ENCODE measurements at regions of chr9 and their contacts with region 1.

Region 1: DNA sequence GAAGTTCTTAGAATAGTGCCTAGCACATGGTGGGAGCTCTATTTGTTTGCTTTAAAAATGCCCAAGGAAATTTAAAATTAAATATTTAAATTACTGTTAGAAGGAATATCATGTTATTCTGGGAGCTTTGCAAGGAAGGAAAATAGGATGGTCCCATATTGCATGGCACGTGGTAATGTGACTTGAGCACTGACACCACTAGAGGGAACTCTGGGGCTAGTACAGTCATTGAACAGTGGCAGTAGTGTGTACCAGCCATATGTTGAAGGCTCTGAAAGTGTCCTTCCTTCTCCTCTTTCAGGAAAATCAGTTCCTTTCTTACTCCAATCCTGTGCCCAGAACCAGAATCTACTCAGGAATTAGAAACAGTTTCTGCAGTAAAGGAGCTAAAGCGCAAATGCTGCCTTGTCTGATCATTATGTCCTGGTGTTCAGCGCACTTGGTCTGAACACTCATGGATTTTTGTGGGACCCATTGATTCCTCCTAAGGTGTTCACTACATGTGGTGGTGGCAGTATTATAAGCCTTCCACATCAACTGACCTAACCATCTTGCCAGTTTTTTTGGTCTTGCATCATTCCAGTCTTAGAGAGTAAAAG is 54.1 kb downstream of the GDA start:
- DNase-seq: peak; percentile 22
- ATAC-seq: peak; percentile 83
- H3K4me3 ChIP-seq: no peak overlapping the region
- H3K27ac ChIP-seq: no peak overlapping the region
- H3K4me1 ChIP-seq: no peaks in the 10 kb centered on the region
- H3K27me3 ChIP-seq: peaks cover 2% of the 10 kb centered on the region; the same call in 1 of the 2 replicates
- CTCF ChIP-seq: peak; percentile 41
- POLR2A ChIP-seq: no peak
- RAD21 ChIP-seq: peak; percentile 39

Region 2: GRCh38 chr9:71549023-71549422 is 654.3 kb before region 1 on chr9:
- CTCF ChIA-PET with region 1: no interaction called
- POLR2A ChIA-PET with region 1: no interaction called
- dilution Hi-C with region 1: no loop called
- in situ Hi-C with region 1: no loop called
- intact Hi-C with region 1: no loop called
- DNase-seq: no peak
- ATAC-seq: no peak
- H3K4me3 ChIP-seq: no peak overlapping the region
- H3K27ac ChIP-seq: no peak overlapping the region
- H3K4me1 ChIP-seq: no peaks in the 10 kb centered on the region
- H3K27me3 ChIP-seq: no peaks in the 10 kb centered on the region
- CTCF ChIP-seq: no peak
- POLR2A ChIP-seq: no peak
- RAD21 ChIP-seq: no peak

Region 3: GRCh38 chr9:72753266-72753893 is 550.1 kb after region 1 on chr9:
- CTCF ChIA-PET with region 1: no interaction called
- POLR2A ChIA-PET with region 1: no interaction called
- dilution Hi-C with region 1: no loop called
- in situ Hi-C with region 1: no loop called
- intact Hi-C with region 1: loop called (anchors 1 kb)
- DNase-seq: peak; percentile 31
- ATAC-seq: peak; percentile 60; the same call in 1 of the 2 replicates
- H3K4me3 ChIP-seq: no peak overlapping the region
- H3K27ac ChIP-seq: no peak overlapping the region
- H3K4me1 ChIP-seq: no peaks in the 10 kb centered on the region
- H3K27me3 ChIP-seq: peaks cover 4% of the 10 kb centered on the region
- CTCF ChIP-seq: peak; percentile 64
- POLR2A ChIP-seq: no peak
- RAD21 ChIP-seq: peak; percentile 73

Region 4: GRCh38 chr9:72817413-72817812 is 614.1 kb after region 1 on chr9:
- CTCF ChIA-PET with region 1: no interaction called
- POLR2A ChIA-PET with region 1: no interaction called
- dilution Hi-C with region 1: no loop called
- in situ Hi-C with region 1: no loop called
- intact Hi-C with region 1: loop called (anchors 2 kb)
- DNase-seq: no peak
- ATAC-seq: no peak
- H3K4me3 ChIP-seq: no peak overlapping the region
- H3K27ac ChIP-seq: no peak overlapping the region
- H3K4me1 ChIP-seq: no peaks in the 10 kb centered on the region
- H3K27me3 ChIP-seq: peaks cover 3% of the 10 kb centered on the region; the same call in 1 of the 2 replicates
- CTCF ChIP-seq: no peak
- POLR2A ChIP-seq: no peak
- RAD21 ChIP-seq: no peak

Region 5: GRCh38 chr9:73081979-73082657 is 878.8 kb after region 1 on chr9:
- CTCF ChIA-PET with region 1: no interaction called
- POLR2A ChIA-PET with region 1: no interaction called
- dilution Hi-C with region 1: no loop called
- in situ Hi-C with region 1: no loop called
- intact Hi-C with region 1: loop called (anchors 2 kb)
- DNase-seq: peak; percentile 27
- ATAC-seq: peak; percentile 82
- H3K4me3 ChIP-seq: no peak overlapping the region
- H3K27ac ChIP-seq: no peak overlapping the region
- H3K4me1 ChIP-seq: no peaks in the 10 kb centered on the region
- H3K27me3 ChIP-seq: no peaks in the 10 kb centered on the region; the same call in 1 of the 2 replicates
- CTCF ChIP-seq: peak; percentile 69
- POLR2A ChIP-seq: no peak
- RAD21 ChIP-seq: peak; percentile 63